GM18951 (cell line): ENCODE measurements at regions of chr2 and their contacts with region 1.

Region 1: GRCh38 chr2:181104512-181105115 is 124.2 kb downstream of the UBE2E3 start:
- POLR2A ChIP-seq: no peak

Region 2: DNA sequence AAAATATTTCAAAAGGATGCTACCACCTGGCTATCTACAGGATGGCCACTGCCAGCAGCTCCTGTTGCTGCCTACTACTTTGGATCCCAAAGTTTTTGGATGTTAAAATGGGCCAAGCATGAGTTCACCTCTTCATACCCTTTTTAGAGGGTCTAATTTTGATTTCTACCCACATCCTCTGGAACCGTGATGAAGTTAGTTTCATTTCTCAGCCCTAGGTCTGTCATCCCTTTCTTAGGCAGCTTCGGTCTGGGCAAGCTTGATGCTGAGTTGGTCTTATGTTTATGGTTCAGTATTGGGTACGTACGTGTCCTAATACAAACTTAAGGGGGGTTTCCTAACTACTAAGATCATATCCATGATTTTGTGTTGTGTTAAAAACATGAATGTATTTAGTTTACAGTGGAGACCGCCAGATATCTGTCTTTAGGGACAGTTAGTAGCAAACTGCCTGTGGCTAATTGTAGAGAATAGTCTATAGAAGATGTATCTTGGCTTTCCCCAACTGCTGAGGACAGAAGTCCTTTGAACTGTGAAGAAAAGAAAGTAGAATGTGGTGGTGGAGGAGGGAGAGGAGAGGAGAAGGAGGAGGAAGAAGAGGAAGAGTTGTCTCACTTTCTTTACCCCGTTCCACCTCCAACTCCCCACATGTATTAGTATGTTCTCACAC is 60.7 kb after region 1 on chr2:
- in situ Hi-C with region 1: no loop called
- POLR2A ChIP-seq: no peak

Region 3: GRCh38 chr2:181466661-181467576 is 362.3 kb after region 1 on chr2:
- in situ Hi-C with region 1: loop called (anchors 10 kb)
- POLR2A ChIP-seq: no peak